ENCODE measurements at regions of chr1 and their contacts with region 1.

Region 1: GRCh38 chr1:179081687-179082332 is at the start of gene TOR3A:
- DNase-seq: peak; percentile 88
- ATAC-seq: peak; percentile 83
- H3K4me3 Mint-ChIP-seq: peak within 1 kb of the TSS; percentile 93
- H3K27ac Mint-ChIP-seq: peak within 1 kb of the TSS; percentile 93
- H3K4me1 Mint-ChIP-seq: peaks cover 30% of the 10 kb centered on the region
- H3K27me3 Mint-ChIP-seq: no peaks in the 10 kb centered on the region
- total RNA-seq, gene TOR3A: 49.3 to 50.4 TPM

Region 2: DNA sequence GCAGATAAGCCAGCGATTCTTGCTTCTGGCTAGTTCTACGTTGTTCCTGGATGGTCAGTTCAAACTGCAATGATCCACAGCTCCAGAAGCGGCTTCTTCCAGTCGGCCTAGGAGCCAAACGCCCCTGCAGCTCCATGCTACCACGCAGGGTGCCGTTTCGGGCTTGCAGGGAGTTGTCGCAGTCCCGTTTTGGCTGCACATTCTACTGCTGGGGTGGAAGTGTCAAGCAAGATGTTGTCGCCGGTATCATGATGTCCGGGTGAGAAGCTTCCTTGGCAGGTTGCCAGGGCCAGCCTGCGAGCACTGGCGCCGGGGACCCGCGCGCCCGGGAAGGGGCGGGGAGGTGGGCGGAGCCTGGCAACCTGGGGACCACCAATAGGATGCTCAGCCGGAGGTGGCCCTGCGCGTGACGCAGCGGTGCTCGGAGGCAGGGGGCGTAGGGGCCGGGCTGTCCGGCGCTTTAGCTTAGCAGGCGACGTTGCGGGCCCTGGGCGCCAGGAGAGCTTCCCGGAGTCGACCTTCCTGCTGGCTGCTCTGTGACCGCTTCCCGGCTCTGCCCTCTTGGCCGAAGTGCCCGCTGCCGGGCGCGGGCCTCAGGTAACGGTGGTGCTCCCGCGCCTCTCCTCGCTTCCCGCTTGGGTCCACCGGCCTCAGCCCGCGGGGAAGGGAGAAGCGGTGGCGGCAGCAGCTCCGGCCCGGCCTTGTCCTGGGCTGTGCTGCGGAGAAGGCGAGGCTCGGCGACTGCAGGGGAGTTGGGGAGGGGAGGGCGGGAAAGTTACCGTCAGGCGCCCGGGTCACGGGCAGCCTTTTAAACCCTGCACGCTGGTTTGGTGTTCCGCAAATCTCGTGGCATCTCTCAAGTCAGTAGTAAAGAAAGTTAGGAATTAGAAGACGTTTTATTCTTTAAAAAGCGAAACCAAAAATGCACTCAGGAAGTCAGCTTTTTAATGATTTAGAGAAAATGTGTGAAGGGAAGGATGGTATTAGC is 211.8 kb after region 1 on chr1 and contains the start of gene SOAT1:
- CTCF ChIA-PET with region 1: interaction called, 16 read pairs
- POLR2A ChIA-PET with region 1: interaction called, 11 read pairs
- DNase-seq: peak; percentile 95
- ATAC-seq: peak; percentile 96
- H3K4me3 Mint-ChIP-seq: peak within 1 kb of the TSS; percentile 96
- H3K27ac Mint-ChIP-seq: peak within 1 kb of the TSS; percentile 92
- H3K4me1 Mint-ChIP-seq: peaks cover 46% of the 10 kb centered on the region
- H3K27me3 Mint-ChIP-seq: no peaks in the 10 kb centered on the region
- total RNA-seq, gene SOAT1: 76.1 to 78.3 TPM